ENCODE measurements at regions of chr5 and their contacts with region 1.

Region 1: GRCh38 chr5:62354028-62354874 is 48.2 kb downstream of the KIF2A start:
- DNase-seq: peak in 10 of 35 experiments; percentile 15 to 76 (median 29)
- ATAC-seq: peak; percentile 52 to 63 (median 58)
- H3K4me3 ChIP-seq: no peak overlapping the region
- H3K4me3 Mint-ChIP-seq: no peak overlapping the region
- H3K27ac ChIP-seq: no peak overlapping the region
- H3K27ac Mint-ChIP-seq: peak overlapping the region; percentile 6 to 55
- H3K4me1 ChIP-seq: no peaks in the 10 kb centered on the region
- H3K4me1 Mint-ChIP-seq: peaks cover 7 to 8% (median 7%) of the 10 kb centered on the region in 3 donors
- H3K27me3 ChIP-seq: no peaks in the 10 kb centered on the region
- H3K27me3 Mint-ChIP-seq: no peaks in the 10 kb centered on the region

Region 2: DNA sequence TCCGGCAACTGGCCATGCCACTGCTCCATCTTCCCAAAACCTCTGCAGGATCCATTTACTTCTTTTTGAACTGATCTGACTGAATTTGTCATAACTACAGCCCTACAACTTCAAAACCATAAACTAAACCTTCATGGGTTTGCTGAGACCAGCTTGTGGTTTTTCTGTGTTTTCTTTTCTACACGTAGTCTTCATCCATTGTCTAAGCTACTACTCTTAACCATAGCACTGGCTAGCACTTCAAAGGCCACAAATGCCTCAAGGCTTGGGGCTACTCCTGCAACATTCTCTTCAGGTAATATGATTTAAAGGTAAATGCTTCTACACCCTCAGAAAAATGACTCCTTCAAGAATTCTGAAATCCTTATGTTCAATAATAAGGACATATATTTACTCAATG is 57.2 kb before region 1 on chr5:
- CTCF ChIA-PET with region 1: interaction called, 7 to 12 read pairs
- POLR2A ChIA-PET with region 1: no interaction called
- DNase-seq: peak in 1 of 35 experiments; percentile 46
- ATAC-seq: peak in 1 of 4 experiments; percentile 64
- H3K4me3 ChIP-seq: no peak overlapping the region
- H3K4me3 Mint-ChIP-seq: peak overlapping the region in 1 of 3 donors; percentile 29
- H3K27ac ChIP-seq: no peak overlapping the region
- H3K27ac Mint-ChIP-seq: peak overlapping the region; percentile 53 to 78
- H3K4me1 ChIP-seq: peaks cover 37 to 46% of the 10 kb centered on the region in 2 experiments
- H3K4me1 Mint-ChIP-seq: peaks cover 42 to 72% (median 54%) of the 10 kb centered on the region in 3 donors
- H3K27me3 ChIP-seq: no peaks in the 10 kb centered on the region
- H3K27me3 Mint-ChIP-seq: no peaks in the 10 kb centered on the region

Region 3: GRCh38 chr5:62305715-62306322 is 48.4 kb before region 1 on chr5 and contains the start of gene KIF2A:
- CTCF ChIA-PET with region 1: interaction called, 7 to 11 read pairs
- POLR2A ChIA-PET with region 1: interaction called, 3 read pairs
- DNase-seq: peak; percentile 82 to 96 (median 88)
- ATAC-seq: peak; percentile 86 to 90 (median 89)
- H3K4me3 ChIP-seq: peak within 1 kb of the TSS; percentile 62 to 75
- H3K4me3 Mint-ChIP-seq: peak within 1 kb of the TSS; percentile 95 to 99 (median 97)
- H3K27ac ChIP-seq: peak within 1 kb of the TSS; percentile 96
- H3K27ac Mint-ChIP-seq: peak within 1 kb of the TSS; percentile 96 to 98
- H3K4me1 ChIP-seq: peaks cover 17 to 29% of the 10 kb centered on the region in 2 experiments
- H3K4me1 Mint-ChIP-seq: peaks cover 47 to 53% (median 50%) of the 10 kb centered on the region in 3 donors
- H3K27me3 ChIP-seq: no peaks in the 10 kb centered on the region
- H3K27me3 Mint-ChIP-seq: no peaks in the 10 kb centered on the region
- total RNA-seq, gene KIF2A: 99.8 to 122 (median 107) TPM

Region 4: GRCh38 chr5:62671479-62671878 is 317.2 kb after region 1 on chr5:
- CTCF ChIA-PET with region 1: no interaction called
- POLR2A ChIA-PET with region 1: no interaction called
- DNase-seq: no peak
- ATAC-seq: no peak
- H3K4me3 ChIP-seq: no peak overlapping the region
- H3K4me3 Mint-ChIP-seq: no peak overlapping the region
- H3K27ac ChIP-seq: no peak overlapping the region
- H3K27ac Mint-ChIP-seq: no peak overlapping the region
- H3K4me1 ChIP-seq: no peaks in the 10 kb centered on the region
- H3K4me1 Mint-ChIP-seq: no peaks in the 10 kb centered on the region
- H3K27me3 ChIP-seq: no peaks in the 10 kb centered on the region
- H3K27me3 Mint-ChIP-seq: no peaks in the 10 kb centered on the region